Natural killer cell (primary cell): ENCODE measurements at regions of chr1 and their contacts with region 1.

Region 1: DNA sequence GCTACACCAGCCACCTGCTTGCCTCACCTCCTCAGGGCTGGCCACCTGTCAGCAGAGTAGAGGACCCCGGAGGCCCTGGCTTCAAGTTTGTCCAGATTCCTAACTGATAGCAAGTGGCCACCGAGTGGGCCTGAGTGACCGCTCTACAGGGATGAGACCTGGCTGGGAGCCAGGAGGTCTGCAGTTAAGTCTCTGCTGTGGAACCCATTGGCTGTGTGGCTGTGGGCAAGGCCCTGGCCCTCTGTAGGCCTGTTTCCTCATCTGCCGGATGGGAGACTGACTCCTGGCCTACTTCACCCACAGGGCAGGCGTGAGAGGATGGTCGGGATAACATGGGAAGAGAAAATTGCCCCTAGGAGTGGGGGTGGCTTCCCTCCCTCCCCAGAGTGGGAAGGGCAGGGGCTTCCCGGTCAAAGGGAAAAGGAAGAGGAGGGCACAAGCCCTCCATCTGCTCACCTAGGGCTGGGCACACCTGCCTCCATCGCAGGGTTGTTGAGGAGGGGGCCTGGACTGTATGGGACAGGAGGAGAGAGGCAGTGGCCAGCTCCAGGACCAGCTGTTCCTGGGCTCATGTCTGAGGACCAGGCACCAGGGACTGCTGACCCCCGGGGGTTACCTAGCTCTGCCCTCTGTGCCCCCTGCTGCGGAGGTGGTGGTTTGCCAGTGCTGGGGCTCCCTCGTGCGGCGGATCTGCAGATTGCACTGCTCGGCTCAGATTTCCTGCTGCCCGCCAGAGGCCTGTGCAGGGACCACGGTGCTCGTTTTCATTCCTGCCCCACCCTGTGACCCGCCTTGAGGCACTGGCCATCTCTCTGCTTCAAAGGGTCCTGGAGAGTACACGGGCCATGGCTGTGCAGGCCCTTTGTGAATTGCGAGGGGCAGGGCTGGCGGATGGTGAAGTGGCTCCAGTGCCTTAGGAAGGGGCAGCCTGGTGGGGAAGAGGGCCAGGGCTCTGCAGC is 9.1 kb upstream of the MTFR1L start:
- DNase-seq: peak; percentile 82 to 88
- ATAC-seq: peak; percentile 84 to 99 (median 97)
- H3K4me3 ChIP-seq: no peak overlapping the region
- H3K4me3 Mint-ChIP-seq: no peak overlapping the region
- H3K27ac ChIP-seq: no peak overlapping the region
- H3K27ac Mint-ChIP-seq: no peak overlapping the region
- H3K4me1 ChIP-seq: peaks cover 15% of the 10 kb centered on the region
- H3K4me1 Mint-ChIP-seq: peaks cover 0 to 5% of the 10 kb centered on the region in 2 donors
- H3K27me3 ChIP-seq: no peaks in the 10 kb centered on the region
- H3K27me3 Mint-ChIP-seq: no peaks in the 10 kb centered on the region
- CTCF ChIP-seq: peak; percentile 93

Region 2: GRCh38 chr1:25503551-25504426 is 306.8 kb before region 1 on chr1:
- intact Hi-C with region 1: loop called (anchors 5 kb)
- DNase-seq: peak; percentile 28 to 83
- ATAC-seq: peak; percentile 58 to 65 (median 64)
- H3K4me3 ChIP-seq: no peak overlapping the region
- H3K4me3 Mint-ChIP-seq: no peak overlapping the region
- H3K27ac ChIP-seq: no peak overlapping the region
- H3K27ac Mint-ChIP-seq: no peak overlapping the region
- H3K4me1 ChIP-seq: no peaks in the 10 kb centered on the region
- H3K4me1 Mint-ChIP-seq: no peaks in the 10 kb centered on the region
- H3K27me3 ChIP-seq: no peaks in the 10 kb centered on the region
- H3K27me3 Mint-ChIP-seq: peaks cover 0 to 7% of the 10 kb centered on the region in 2 donors
- CTCF ChIP-seq: peak; percentile 40